A673 (cell line): ENCODE measurements at regions of chr11 and their contacts with region 1.

Region 1: GRCh38 chr11:46554205-46555055 is 39.4 kb downstream of the AMBRA1 start:
- DNase-seq: peak; percentile 56
- H3K4me3 ChIP-seq: no peak overlapping the region
- H3K27ac ChIP-seq: peak overlapping the region; percentile 19
- H3K4me1 ChIP-seq: peaks cover 34% of the 10 kb centered on the region
- H3K27me3 ChIP-seq: no peaks in the 10 kb centered on the region
- CTCF ChIP-seq: no peak

Region 2: DNA sequence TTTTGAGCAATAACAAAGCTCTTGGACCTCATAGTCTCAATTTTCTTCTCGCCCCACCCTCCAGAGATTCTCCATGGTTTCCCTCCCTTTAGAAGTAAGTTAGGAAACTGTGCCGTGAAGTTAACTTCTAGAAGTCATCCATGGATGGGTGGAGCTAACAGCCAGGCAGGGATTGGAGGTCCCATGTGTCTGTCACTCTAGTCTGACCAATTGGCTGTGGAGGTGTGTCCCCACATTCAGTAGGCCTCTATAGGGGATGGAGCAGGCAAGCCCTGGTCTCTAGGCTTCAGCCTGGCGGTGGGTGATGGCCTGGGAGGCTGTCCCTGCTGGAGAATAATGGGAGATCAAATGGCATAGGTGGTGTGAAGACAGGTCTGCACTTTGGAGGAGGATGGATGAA is 1654.5 kb before region 1 on chr11:
- CTCF ChIA-PET with region 1: no interaction called
- POLR2A ChIA-PET with region 1: interaction called, 10 read pairs
- intact Hi-C with region 1: no loop called
- DNase-seq: peak; percentile 92
- H3K4me3 ChIP-seq: no peak overlapping the region
- H3K27ac ChIP-seq: no peak overlapping the region
- H3K4me1 ChIP-seq: no peaks in the 10 kb centered on the region
- H3K27me3 ChIP-seq: no peaks in the 10 kb centered on the region
- CTCF ChIP-seq: no peak

Region 3: DNA sequence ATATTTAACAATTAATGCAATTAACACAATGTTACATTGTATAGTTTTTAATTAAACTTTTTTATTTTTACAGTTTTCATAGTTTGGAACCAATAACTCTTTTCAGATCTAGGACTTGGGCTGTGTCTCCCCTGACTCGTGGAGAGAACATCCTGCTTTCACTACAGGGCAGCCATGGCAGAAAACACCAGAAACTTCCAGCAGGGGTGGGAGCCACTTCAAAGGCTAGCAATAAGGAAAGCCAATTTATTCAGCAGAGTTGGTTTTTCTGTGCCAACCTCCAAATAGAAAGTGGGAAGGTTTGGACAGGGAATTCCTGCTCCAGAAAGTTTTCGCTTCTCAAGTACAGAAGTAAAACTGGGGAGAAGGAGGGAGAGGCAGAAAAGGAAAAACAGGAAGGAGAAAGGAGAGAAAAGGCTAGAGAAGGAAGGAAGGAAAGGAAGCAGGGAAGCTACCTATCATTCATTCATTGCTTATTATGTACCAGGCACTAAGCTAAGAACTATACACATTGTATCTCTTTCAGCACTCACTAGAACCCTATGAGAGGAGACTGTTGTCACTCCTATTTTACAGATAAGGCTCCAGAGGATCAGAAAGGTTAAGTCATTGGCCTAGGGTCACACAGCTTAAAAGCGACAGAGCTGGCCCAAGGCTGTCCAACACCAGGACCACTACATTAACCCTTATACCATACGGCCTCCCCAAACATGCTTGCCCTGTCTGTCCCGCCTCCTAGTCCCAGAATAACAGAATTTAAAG is 331.8 kb before region 1 on chr11:
- CTCF ChIA-PET with region 1: no interaction called
- POLR2A ChIA-PET with region 1: no interaction called
- intact Hi-C with region 1: no loop called
- DNase-seq: no peak
- H3K4me3 ChIP-seq: no peak overlapping the region
- H3K27ac ChIP-seq: no peak overlapping the region
- H3K4me1 ChIP-seq: no peaks in the 10 kb centered on the region
- H3K27me3 ChIP-seq: no peaks in the 10 kb centered on the region
- CTCF ChIP-seq: no peak; the same call in 1 of the 2 replicates

Region 4: DNA sequence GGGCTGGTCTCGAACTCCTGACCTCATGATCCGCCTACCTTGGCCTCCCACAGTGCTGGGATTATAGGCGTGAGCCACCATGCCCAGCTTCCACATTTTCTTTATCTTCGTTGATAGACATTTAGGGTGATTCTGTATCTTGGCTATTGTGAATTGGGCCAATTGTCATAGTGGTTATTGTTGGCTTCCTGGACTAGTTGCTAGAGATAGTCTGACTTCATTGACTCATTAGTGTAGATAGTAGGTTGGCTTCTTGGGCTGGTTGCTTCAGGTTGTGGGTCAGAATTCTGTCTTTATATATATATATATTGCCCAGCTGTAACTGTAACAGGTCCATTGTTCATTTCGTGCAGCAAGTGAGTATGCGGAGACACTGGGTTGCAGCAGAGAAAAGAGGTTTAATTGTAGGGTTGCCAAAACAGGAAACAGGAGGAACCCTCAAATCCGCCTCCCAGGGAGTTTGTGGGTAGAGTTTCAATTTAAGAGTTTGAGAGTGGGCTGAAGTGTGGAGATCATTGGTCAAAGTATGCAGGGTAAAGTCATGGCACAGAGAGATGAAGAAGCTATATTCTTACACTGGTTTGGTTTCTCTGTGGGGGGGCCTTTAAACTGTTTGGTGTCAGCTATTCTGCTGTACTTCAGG is 84.9 kb after region 1 on chr11:
- CTCF ChIA-PET with region 1: no interaction called
- POLR2A ChIA-PET with region 1: no interaction called
- intact Hi-C with region 1: no loop called
- DNase-seq: peak; percentile 93
- H3K4me3 ChIP-seq: no peak overlapping the region
- H3K27ac ChIP-seq: peak overlapping the region; percentile 1
- H3K4me1 ChIP-seq: peaks cover 3% of the 10 kb centered on the region
- H3K27me3 ChIP-seq: no peaks in the 10 kb centered on the region
- CTCF ChIP-seq: no peak

Region 5: DNA sequence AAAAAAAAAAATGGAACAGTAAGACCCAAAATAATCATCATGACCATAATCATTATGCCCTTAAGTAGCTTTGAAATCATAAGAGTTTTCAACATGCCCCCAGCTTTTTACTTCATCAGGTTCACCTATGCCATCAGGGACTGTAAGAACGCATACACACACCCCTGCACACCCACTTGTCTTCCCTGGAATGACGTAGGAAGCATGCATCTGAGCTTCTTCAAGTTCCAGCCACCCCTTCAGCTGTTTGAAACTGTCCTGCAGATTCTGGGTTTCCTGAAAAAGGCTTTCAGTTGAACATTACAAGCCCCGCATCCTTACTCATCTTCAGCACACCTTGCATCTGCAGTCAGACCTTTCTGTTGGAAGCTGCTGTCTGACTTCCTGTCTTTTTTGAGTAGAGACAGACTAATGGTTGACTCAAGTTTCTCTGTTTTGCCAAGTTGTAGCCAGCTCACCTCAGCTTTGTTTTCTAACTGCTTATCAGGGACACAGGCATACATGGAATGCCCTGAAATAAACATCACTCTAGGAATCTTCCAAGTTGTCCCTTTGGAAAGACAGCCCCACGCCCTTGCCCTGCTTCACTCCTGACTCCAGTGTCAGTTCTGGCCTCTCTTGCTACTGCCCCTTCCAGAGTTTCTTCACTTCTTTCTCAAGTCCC is 109.0 kb after region 1 on chr11:
- CTCF ChIA-PET with region 1: no interaction called
- POLR2A ChIA-PET with region 1: interaction called, 17 read pairs
- intact Hi-C with region 1: no loop called
- DNase-seq: no peak
- H3K4me3 ChIP-seq: no peak overlapping the region
- H3K27ac ChIP-seq: no peak overlapping the region
- H3K4me1 ChIP-seq: no peaks in the 10 kb centered on the region
- H3K27me3 ChIP-seq: no peaks in the 10 kb centered on the region
- CTCF ChIP-seq: no peak

Region 6: DNA sequence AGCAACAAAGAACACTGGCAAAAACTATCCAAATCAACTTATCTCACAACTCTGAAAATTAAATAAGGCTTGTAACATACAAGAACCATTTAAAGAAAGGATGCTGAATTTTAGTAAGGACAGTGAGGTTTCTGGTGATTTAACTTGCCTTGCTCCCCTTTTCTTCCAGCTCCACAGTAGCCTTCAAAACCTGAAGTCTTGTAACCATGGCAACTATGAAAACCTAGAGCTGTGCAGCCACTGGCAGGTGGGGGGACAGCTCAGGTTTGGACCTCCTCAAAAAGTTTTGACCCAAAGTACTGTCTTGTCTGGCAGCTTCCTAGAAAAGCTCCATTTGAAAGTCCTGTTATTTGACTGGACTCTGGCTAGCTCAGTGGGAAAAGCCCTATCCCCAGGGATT is 231.7 kb after region 1 on chr11:
- CTCF ChIA-PET with region 1: no interaction called
- POLR2A ChIA-PET with region 1: no interaction called
- intact Hi-C with region 1: no loop called
- DNase-seq: no peak
- H3K4me3 ChIP-seq: no peak overlapping the region
- H3K27ac ChIP-seq: no peak overlapping the region
- H3K4me1 ChIP-seq: no peaks in the 10 kb centered on the region
- H3K27me3 ChIP-seq: no peaks in the 10 kb centered on the region
- CTCF ChIP-seq: no peak

Region 7: DNA sequence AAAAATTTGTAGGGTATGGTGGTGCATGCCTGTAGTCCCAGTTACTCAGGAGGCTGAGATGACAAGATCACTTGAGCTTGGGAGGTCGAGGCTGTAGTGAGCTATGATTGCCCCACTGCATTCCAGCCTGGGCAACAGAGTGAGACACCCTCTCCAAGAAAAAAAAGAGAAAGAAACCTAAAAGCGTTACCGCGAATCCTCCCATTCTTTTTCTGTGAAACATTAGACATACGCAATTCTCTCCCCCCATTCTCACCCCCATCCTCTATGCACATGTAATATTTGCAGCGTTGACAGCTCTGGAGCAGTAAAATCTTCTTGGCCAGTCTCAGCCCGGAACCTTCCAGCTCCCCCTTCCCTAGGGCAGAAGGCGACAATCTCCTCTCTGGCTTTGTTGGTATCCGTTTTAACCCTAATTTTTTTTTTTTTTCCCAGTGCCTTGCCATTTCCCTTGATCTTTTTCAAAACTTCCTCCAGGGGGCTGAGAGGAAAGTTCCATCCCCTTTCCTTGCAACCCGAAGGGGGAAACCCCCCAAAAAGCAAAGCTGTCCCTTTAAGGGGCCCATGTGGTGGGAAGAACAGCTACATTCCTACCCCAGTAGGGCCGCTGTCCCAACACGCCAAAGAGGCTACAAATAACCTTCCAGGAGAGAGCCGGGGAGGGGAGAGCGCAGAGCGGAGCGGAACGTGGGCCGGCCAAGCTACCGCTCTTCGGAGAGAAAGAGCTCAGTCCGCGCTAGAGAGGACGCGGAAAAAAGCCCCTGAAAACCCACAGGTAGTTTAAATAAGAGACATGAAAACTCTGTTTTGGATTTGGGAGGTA is 362.1 kb after region 1 on chr11:
- CTCF ChIA-PET with region 1: no interaction called
- POLR2A ChIA-PET with region 1: interaction called, 13 read pairs
- intact Hi-C with region 1: no loop called
- DNase-seq: peak; percentile 96
- H3K4me3 ChIP-seq: peak overlapping the region; percentile 71
- H3K27ac ChIP-seq: peak overlapping the region; percentile 60
- H3K4me1 ChIP-seq: peaks cover 47% of the 10 kb centered on the region
- H3K27me3 ChIP-seq: no peaks in the 10 kb centered on the region
- CTCF ChIP-seq: peak; percentile 69